ENCODE measurements at regions of chr2 and their contacts with region 1.

Region 1: DNA sequence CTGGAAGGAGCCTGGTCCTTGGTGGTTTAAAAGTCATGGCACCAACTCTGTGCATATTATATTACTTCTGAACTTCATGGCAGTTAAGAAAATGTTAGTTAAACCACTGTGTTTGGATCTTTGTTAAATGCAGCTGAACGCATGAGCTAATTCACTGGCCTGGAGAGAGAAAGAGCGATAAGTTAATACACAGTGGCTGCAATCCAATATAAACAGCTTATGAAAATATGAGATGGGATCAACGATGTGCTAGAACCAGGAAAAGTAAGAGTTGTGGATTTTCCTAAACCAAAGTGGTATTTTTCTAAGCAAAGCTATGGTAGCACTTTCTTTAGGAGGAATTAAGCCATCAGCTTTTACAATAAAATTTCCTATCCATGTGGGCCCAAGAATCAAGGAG is 326.7 kb downstream of the MTX2 start:
- DNase-seq: no peak
- H3K4me3 ChIP-seq: no peak overlapping the region
- H3K27me3 ChIP-seq: peaks cover 7% of the 10 kb centered on the region
- CTCF ChIP-seq: no peak

Region 2: GRCh38 chr2:176356251-176356650 is 239.7 kb before region 1 on chr2:
- CTCF ChIA-PET with region 1: no interaction called
- POLR2A ChIA-PET with region 1: no interaction called
- DNase-seq: no peak
- H3K4me3 ChIP-seq: no peak overlapping the region
- H3K27me3 ChIP-seq: no peaks in the 10 kb centered on the region
- CTCF ChIP-seq: no peak

Region 3: GRCh38 chr2:176582990-176583481 is 12.9 kb before region 1 on chr2:
- CTCF ChIA-PET with region 1: interaction called, 15 read pairs
- POLR2A ChIA-PET with region 1: no interaction called
- DNase-seq: peak; percentile 73
- H3K4me3 ChIP-seq: no peak overlapping the region
- H3K27me3 ChIP-seq: no peaks in the 10 kb centered on the region; the same call in 1 of the 2 replicates
- CTCF ChIP-seq: no peak